ENCODE measurements at regions of chr1 and their contacts with region 1.

Region 1: GRCh38 chr1:21896652-21897532 is 40.2 kb downstream of the HSPG2 start:
- DNase-seq: peak; percentile 92

Region 2: DNA sequence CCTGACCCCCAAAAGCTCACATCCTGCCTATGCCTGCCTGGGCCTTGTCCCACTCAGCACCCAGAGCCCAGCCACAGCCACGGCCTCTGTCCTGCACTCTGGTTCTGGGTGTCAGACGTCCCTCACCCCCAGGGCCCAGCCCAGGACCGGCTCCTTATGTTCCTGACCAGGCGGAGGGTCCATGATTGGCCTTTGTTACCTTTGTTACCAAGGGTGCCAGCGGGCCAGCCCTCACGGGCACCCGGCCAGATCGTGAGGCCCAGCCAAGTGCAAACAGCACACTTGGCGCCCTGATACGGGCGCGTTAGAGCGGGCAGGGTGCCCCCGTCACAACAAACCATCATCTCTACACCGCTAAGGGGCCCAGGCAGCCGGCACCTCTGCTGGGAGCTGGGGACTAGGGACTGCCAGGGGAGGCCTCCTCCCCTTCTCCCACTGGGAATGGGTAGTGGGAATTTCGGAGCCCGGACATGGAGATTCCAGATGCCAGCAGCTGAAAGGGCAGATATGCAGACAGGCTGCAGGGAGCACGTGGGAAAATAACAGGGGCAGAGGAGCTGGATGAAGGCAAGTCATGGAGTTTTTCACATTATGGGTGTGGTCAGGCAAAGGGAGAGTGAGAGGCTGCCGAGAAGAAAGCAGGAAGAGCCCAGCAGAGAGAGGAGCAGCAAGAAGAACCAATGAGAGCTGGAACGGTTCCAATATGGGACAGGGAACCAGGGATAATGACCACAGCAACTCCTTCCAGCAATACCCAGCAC is 18.2 kb after region 1 on chr1:
- intact Hi-C with region 1: loop called (anchors 2 kb)
- DNase-seq: no peak

Region 3: DNA sequence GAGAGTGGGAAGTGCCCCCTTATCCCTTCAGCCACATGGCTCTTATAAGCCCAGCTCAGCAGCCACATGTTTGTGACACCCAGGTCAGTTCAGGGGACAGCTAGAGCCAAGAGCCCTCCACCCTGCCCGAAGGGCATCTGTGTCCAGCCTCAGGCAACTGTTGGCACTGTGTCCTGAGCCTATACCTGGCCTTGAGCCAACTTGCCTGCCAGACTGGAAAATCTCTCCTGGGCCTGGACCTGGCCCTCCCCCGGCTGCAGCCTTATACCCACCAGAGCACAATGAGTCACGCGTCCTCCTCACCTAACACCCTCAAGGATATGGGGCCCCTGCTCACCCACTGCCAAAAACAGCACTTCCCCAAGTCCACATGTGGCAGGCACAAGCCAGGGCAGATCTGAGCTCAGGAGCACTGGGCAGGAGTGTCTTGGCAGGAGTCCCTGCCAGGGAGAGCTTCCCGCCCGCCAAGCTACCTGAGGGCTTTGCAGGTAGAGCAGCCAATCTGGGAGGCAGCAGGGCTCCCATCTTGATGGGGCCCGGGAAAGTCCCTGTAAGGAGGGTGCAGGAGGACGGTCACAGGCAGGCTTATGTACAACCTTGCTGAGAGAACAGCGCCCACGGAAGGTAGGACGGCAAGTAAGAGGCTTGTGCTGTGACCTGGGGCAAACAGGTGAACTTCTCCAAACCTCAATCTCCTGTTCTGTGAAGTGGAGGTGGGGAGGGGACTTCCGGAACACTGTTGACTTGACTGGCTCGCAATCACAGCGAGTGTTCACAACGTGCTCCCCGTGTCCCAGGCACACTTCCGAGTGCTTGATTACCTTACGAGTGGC is 60.0 kb after region 1 on chr1:
- intact Hi-C with region 1: loop called (anchors 2 kb)
- DNase-seq: no peak

Measured in cardiac septum (tissue), 1 donor.